ENCODE measurements at regions of chr3 and their contacts with region 1.

Region 1: GRCh38 chr3:183560607-183561006 is 5.1 kb upstream of the KLHL6 start:
- DNase-seq: peak; percentile 60
- H3K4me3 Mint-ChIP-seq: no peak overlapping the region
- H3K27ac Mint-ChIP-seq: no peak overlapping the region
- H3K4me1 Mint-ChIP-seq: peaks cover 32% of the 10 kb centered on the region
- H3K27me3 Mint-ChIP-seq: peaks cover 4% of the 10 kb centered on the region

Region 2: GRCh38 chr3:183477801-183478456 is 82.7 kb before region 1 on chr3:
- CTCF ChIA-PET with region 1: interaction called, 16 read pairs
- DNase-seq: no peak
- H3K4me3 Mint-ChIP-seq: no peak overlapping the region
- H3K27ac Mint-ChIP-seq: no peak overlapping the region
- H3K4me1 Mint-ChIP-seq: peaks cover 6% of the 10 kb centered on the region
- H3K27me3 Mint-ChIP-seq: peaks cover 15% of the 10 kb centered on the region